Transverse colon (tissue), 4 donors: ENCODE measurements at regions of chr15 and their contacts with region 1.

Region 1: GRCh38 chr15:78739996-78740903 is 71.0 kb downstream of the ADAMTS7 start:
- DNase-seq: peak; percentile 83
- H3K4me3 ChIP-seq: no peak overlapping the region
- H3K27ac ChIP-seq: no peak overlapping the region
- H3K4me1 ChIP-seq: peaks cover 0 to 4% (median 1%) of the 10 kb centered on the region in 4 donors
- H3K27me3 ChIP-seq: no peaks in the 10 kb centered on the region
- CTCF ChIP-seq: peak in 4 of 5 experiments; percentile 23 to 46 (median 37)
- EP300 ChIP-seq: no peak
- POLR2A ChIP-seq: no peak

Region 2: DNA sequence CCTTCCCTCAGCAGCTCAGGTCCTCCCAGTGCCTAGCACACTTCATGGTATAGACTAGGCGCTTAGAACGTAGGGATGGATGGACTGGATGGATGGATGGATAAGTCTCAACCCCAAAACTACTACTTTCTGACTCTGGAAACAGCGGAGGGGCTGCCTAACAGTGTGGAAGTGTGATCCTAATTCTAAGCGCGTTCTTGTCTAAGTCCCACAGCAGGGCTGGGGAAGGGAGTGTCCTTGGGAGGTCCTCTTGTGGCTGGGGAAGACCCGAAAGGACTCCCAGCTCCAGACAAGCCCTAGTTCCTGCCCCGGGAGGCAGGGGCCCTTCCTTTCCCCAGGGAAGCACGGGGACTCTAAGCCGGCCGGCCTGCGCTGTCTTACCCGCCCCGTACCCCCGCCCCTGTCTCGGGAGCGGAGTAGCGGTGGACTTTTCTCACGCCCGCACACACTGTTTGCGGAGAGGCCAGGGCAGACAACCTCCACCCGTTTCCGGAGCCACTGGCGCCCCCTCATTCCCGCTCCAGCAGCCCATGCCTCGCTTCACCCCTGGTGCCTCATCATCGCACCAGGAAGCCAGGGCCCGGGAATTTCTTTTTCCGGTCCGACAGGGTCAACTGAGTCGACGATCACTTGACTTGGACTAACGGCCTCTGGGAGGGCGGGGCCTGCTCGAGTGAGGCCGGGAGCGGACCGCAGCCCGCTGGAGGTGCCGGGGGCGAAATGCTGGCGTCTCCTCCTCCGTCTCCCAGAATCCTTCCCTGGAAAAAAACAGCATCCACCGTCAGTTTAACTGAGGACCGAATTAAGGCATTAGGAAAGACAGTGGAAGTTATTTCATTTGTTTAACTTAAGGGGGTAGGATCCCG is 796.0 kb before region 1 on chr15:
- in situ Hi-C with region 1: loop called in 1 of 4 experiments (anchors 25 kb)
- intact Hi-C with region 1: no loop called
- DNase-seq: peak; percentile 88
- H3K4me3 ChIP-seq: peak overlapping the region; percentile 29 to 52 (median 46)
- H3K27ac ChIP-seq: peak overlapping the region; percentile 64 to 81 (median 74)
- H3K4me1 ChIP-seq: peaks cover 0 to 16% (median 4%) of the 10 kb centered on the region in 4 donors
- H3K27me3 ChIP-seq: no peaks in the 10 kb centered on the region
- CTCF ChIP-seq: no peak
- EP300 ChIP-seq: no peak
- POLR2A ChIP-seq: no peak

Region 3: GRCh38 chr15:78049691-78050440 is 690.4 kb before region 1 on chr15:
- in situ Hi-C with region 1: no loop called
- intact Hi-C with region 1: loop called (anchors 10 kb)
- DNase-seq: no peak
- H3K4me3 ChIP-seq: no peak overlapping the region
- H3K27ac ChIP-seq: peak overlapping the region; percentile 71 to 80 (median 72)
- H3K4me1 ChIP-seq: peaks cover 69 to 87% (median 85%) of the 10 kb centered on the region in 4 donors
- H3K27me3 ChIP-seq: no peaks in the 10 kb centered on the region
- CTCF ChIP-seq: no peak
- EP300 ChIP-seq: no peak
- POLR2A ChIP-seq: peak; percentile 18